Ovary (tissue), 10 donors: ENCODE measurements at regions of chrX and their contacts with region 1.

Region 1: GRCh38 chrX:18390941-18391538 is 34.4 kb upstream of the CDKL5 start:
- DNase-seq: peak; percentile 53 to 75 (median 68)
- H3K4me3 ChIP-seq: no peak overlapping the region
- H3K27ac ChIP-seq: no peak overlapping the region
- H3K4me1 ChIP-seq: no peaks in the 10 kb centered on the region
- H3K27me3 ChIP-seq: no peaks in the 10 kb centered on the region
- CTCF ChIP-seq: peak; percentile 54 to 67 (median 62)
- EP300 ChIP-seq: no peak
- POLR2A ChIP-seq: no peak

Region 2: DNA sequence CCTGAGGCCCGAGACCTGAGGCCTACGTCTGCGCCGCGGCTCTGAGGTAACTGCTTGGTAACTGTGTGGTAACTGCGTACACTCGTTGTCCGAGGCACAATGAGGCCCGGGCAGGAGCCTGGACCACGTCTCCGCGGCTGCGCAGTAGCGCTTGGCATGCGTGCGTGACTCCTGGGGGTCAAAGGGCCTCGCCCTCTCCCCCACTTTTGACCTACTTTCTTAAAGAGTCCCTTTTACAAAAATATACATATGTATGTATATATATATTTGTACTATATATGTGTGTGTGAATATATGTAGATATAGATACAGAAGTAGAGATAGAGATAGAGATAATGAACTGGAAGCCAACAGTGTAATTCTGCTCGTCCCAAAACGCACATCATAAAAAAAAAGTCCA is 170.3 kb before region 1 on chrX and contains the start of gene BEND2:
- intact Hi-C with region 1: no loop called
- DNase-seq: no peak
- H3K4me3 ChIP-seq: no peak within 1 kb of the TSS
- H3K27ac ChIP-seq: no peak within 1 kb of the TSS
- H3K4me1 ChIP-seq: no peaks in the 10 kb centered on the region
- H3K27me3 ChIP-seq: no peaks in the 10 kb centered on the region
- CTCF ChIP-seq: no peak
- EP300 ChIP-seq: no peak
- POLR2A ChIP-seq: no peak
- total RNA-seq, gene BEND2: not detected

Region 3: DNA sequence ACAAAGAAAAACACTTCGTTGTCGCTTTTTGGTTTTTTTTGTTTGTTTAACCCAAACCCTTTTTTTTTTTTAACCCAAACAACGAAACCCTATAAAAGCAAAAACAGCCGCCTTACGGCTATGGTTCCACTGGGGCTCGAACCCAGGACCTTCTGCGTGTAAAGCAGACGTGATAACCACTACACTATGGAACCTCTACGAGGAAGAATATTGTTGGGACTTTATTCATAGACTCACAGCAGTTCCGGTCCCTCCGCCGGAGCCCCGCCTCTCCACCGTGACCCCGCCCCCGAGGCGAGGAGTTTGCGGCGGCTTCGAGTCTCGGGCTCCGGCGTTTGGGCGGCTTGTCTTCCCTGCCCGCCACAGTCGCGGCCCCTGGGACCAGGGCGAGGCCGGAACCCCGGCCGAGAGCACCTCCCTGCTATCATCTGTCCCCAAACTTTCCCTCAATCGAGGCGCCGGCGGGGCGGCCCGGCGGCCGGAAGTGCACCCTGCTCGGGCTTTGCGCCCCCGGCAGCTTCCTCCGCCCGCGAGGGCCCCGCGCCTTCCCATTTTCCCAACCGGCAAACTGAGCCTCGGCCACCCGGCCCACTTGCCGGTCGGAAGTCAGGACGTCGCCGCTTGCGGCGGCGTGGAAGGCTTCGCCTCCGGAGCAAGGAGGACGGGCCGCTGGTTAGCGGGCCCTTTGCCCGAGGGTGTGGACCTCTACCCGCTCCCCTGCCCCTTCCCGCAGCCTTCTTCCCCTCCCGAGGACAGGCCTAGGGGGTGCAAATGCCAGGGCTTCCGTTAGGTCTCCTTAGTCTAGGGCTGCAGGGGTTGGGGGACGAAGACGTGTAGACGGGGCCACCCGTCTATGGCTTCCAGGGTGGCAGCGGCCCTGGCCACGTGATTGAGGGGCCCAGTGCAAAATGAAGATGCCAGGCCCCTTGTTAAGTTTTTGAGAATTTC is 284.0 kb after region 1 on chrX:
- intact Hi-C with region 1: loop called in 1 of 4 experiments (anchors 10 kb)
- DNase-seq: peak; percentile 71 to 85 (median 82)
- H3K4me3 ChIP-seq: peak overlapping the region; percentile 57
- H3K27ac ChIP-seq: peak overlapping the region; percentile 68 to 73
- H3K4me1 ChIP-seq: no peaks in the 10 kb centered on the region
- H3K27me3 ChIP-seq: no peaks in the 10 kb centered on the region
- CTCF ChIP-seq: no peak
- EP300 ChIP-seq: no peak
- POLR2A ChIP-seq: peak; percentile 53

Region 4: DNA sequence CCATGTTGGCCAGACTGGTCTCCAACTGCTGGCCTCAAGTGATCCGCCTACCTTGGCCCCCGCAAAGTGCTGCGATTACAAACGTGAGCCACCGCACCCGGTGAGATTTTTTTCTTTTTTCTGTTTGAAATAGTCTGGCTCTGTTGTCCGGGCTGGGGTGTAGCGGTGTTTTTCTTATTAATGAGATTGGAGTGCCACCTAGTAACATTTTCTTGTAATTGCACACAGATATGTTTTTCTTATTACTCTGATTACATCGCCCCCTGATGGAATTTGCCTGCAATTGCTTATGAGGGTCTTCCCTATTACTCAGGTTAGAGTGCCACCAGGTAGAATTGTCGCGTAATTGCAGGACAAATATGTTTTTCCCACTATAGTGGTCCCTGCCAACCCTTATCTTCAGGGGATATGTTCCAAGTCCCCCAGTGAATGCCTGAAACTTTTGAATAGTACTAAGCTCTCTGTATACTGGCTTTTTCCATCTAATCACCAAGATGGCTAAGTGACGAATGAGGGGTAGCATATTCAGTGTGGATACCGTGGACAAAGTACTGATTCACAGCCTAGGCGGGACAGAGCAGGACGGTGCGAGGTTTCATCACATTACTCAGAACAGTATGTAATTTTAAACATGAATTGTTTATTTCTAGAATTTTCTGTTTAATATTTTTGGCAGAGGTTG is 944.0 kb after region 1 on chrX:
- intact Hi-C with region 1: loop called in 3 of 4 experiments (anchors 5 to 10 kb)
- DNase-seq: no peak
- H3K4me3 ChIP-seq: no peak overlapping the region
- H3K27ac ChIP-seq: no peak overlapping the region
- H3K4me1 ChIP-seq: no peaks in the 10 kb centered on the region
- H3K27me3 ChIP-seq: no peaks in the 10 kb centered on the region
- CTCF ChIP-seq: no peak
- EP300 ChIP-seq: no peak
- POLR2A ChIP-seq: no peak